A549 (cell line): ENCODE measurements at regions of chr10 and their contacts with region 1.

Region 1: GRCh38 chr10:21364196-21365114 is 161.0 kb downstream of the SKIDA1 start:
- DNase-seq: peak; percentile 89 to 99
- ATAC-seq: peak; percentile 96 to 97
- H3K4me3 ChIP-seq: peak overlapping the region; percentile 18; the same call in 1 of the 3 replicates
- H3K27ac ChIP-seq: peak overlapping the region; percentile 95 to 98
- H3K4me1 ChIP-seq: peaks cover 80% of the 10 kb centered on the region
- CTCF ChIP-seq: no peak
- EP300 ChIP-seq: peak; percentile 89 to 96; a peak in 4 of 5 replicates
- POLR2A ChIP-seq: no peak
- RAD21 ChIP-seq: peak; percentile 56 to 64

Region 2: DNA sequence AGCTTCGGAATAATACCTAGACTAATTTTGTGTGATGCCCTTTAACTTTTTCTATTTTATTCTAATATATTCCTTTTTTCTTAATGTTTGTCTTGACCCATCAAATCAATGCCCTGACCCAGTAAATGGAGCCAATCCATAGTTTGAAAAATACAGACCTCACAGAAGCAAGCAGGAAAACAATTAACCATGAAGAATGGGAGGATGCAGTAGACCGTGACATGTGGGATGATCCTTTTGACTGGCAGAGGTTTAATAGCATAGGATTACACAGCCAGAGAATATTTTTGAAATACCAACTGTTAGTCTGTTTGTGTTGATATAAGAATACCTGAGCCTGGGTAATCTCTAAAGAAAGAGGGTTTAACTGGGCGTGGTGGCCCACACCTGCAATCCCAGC is 324.7 kb before region 1 on chr10:
- CTCF ChIA-PET with region 1: no interaction called
- POLR2A ChIA-PET with region 1: no interaction called
- DNase-seq: no peak
- ATAC-seq: no peak
- H3K4me3 ChIP-seq: no peak overlapping the region
- H3K27ac ChIP-seq: no peak overlapping the region
- H3K4me1 ChIP-seq: peaks cover 9% of the 10 kb centered on the region
- CTCF ChIP-seq: no peak
- EP300 ChIP-seq: no peak
- POLR2A ChIP-seq: no peak
- RAD21 ChIP-seq: no peak

Region 3: GRCh38 chr10:21292763-21293517 is 71.5 kb before region 1 on chr10:
- CTCF ChIA-PET with region 1: interaction called, 4 read pairs
- POLR2A ChIA-PET with region 1: interaction called, 11 read pairs
- DNase-seq: peak; percentile 89 to 98
- ATAC-seq: peak; percentile 93 to 97
- H3K4me3 ChIP-seq: peak overlapping the region; percentile 44
- H3K27ac ChIP-seq: peak overlapping the region; percentile 92 to 97
- H3K4me1 ChIP-seq: peaks cover 59% of the 10 kb centered on the region
- CTCF ChIP-seq: no peak
- EP300 ChIP-seq: peak; percentile 86 to 98
- POLR2A ChIP-seq: no peak
- RAD21 ChIP-seq: peak; percentile 40 to 65

Region 4: GRCh38 chr10:21379143-21379542 is 14.7 kb after region 1 on chr10:
- CTCF ChIA-PET with region 1: no interaction called
- POLR2A ChIA-PET with region 1: no interaction called
- DNase-seq: no peak
- ATAC-seq: no peak
- H3K4me3 ChIP-seq: no peak overlapping the region
- H3K27ac ChIP-seq: peak overlapping the region in 1 of 2 experiments; percentile 1; a peak in 1 of 6 replicates
- H3K4me1 ChIP-seq: peaks cover 15% of the 10 kb centered on the region
- CTCF ChIP-seq: no peak
- EP300 ChIP-seq: no peak
- POLR2A ChIP-seq: no peak
- RAD21 ChIP-seq: no peak